ENCODE measurements at regions of chr17 and their contacts with region 1.

Region 1: DNA sequence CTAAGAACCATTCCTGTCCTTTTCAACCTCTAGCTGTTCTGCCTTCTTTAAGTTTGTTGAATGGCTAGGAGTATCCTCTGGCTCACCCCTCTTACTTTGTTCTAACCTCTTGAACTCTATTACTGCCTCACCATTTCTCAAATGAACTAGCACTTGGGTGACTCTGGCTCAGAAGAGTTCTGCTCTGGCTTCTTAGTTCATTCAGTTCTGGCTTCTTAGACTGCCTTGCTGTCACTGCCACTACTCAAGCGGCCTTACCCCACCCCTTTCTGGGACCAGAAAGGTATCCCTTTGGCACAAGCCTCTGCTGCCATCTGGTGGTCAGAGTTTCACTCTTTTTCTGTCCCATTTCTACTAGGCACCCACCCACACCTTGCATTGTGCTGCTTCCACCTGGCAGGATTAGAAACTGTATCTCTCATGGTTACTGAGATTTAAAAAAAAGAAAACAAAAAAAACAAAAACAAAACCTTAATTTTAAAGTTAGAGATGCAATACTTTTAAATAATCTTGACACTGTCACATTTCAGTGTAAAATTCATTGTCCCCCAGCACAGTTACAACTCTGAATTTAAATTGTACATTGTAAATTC is 6.8 kb upstream of the ABCA10 start:
- DNase-seq: peak; percentile 90
- H3K4me3 ChIP-seq: no peak overlapping the region
- H3K27ac ChIP-seq: peak overlapping the region; percentile 24
- H3K4me1 ChIP-seq: peaks cover 4% of the 10 kb centered on the region
- H3K27me3 ChIP-seq: no peaks in the 10 kb centered on the region
- CTCF ChIP-seq: peak; percentile 67 to 68
- POLR2A ChIP-seq: no peak

Region 2: GRCh38 chr17:68777243-68777855 is 458.1 kb before region 1 on chr17:
- CTCF ChIA-PET with region 1: interaction called, 55 read pairs
- POLR2A ChIA-PET with region 1: no interaction called
- dilution Hi-C with region 1: no loop called
- intact Hi-C with region 1: loop called (anchors 1 kb)
- DNase-seq: peak; percentile 90
- H3K4me3 ChIP-seq: no peak overlapping the region
- H3K27ac ChIP-seq: peak overlapping the region; percentile 44
- H3K4me1 ChIP-seq: peaks cover 36% of the 10 kb centered on the region
- H3K27me3 ChIP-seq: no peaks in the 10 kb centered on the region
- CTCF ChIP-seq: peak; percentile 63
- POLR2A ChIP-seq: no peak

Region 3: DNA sequence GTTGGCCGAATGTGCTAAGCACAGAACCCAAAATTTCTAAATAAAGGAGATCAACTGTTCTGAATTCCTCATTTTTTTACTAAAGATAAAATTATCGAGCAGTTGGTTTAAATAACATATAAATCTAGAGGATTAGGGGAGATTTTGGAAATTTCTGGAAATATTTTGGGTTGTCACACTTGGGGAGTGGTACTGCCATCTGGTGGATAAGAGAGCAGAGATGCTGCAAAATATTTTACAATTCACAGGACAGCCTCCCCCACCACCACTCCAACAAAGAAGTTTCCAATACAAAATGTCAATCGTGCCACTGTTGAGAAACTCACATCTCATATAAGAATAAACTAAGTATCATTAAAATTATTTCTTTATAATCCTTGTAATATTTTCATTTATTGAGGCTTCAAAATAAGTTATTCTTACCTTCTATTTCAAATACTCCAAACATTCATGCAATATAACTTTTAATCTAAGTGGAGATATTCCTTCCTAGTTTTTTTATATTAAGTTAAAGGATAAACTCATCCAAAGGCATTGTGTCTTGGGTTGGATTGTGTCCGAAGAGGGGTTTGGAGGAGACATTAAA is 263.2 kb before region 1 on chr17:
- CTCF ChIA-PET with region 1: no interaction called
- POLR2A ChIA-PET with region 1: no interaction called
- dilution Hi-C with region 1: no loop called
- intact Hi-C with region 1: loop called (anchors 1 kb)
- DNase-seq: peak; percentile 64
- H3K4me3 ChIP-seq: no peak overlapping the region
- H3K27ac ChIP-seq: no peak overlapping the region
- H3K4me1 ChIP-seq: no peaks in the 10 kb centered on the region
- H3K27me3 ChIP-seq: no peaks in the 10 kb centered on the region
- CTCF ChIP-seq: peak; percentile 50 to 58
- POLR2A ChIP-seq: no peak

Measured in endothelial cell of umbilical vein (primary cell).